ENCODE measurements at regions of chr2 and their contacts with region 1.

Region 1: GRCh38 chr2:182980115-182980514 is 58.1 kb downstream of the NCKAP1 start:
- ATAC-seq: peak in 4 of 8 experiments; percentile 45 to 70 (median 54)
- H3K4me3 ChIP-seq: no peak overlapping the region
- H3K27ac ChIP-seq: no peak overlapping the region
- H3K4me1 ChIP-seq: no peaks in the 10 kb centered on the region

Region 2: DNA sequence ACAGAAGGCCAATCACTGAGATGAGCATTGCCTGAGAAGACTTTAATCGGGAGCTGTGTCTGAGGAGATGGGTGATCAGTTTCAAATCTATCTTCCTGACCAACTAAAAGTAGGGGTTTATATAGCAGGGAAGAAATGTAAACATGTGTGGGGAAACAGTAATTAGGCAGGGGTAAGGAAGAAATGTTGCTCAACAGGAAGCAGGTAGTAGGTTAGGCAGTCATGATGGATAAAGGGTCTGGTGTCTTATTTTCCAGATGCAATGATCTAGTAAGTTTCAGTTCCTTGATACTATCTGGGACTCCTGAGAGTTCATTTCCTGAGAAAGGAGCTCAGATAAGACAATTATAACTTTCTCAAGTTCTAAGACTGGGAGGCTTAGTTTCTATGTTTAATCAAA is 297.9 kb before region 1 on chr2:
- in situ Hi-C with region 1: no loop called
- ATAC-seq: no peak
- H3K4me3 ChIP-seq: no peak overlapping the region
- H3K27ac ChIP-seq: no peak overlapping the region
- H3K4me1 ChIP-seq: no peaks in the 10 kb centered on the region

Region 3: DNA sequence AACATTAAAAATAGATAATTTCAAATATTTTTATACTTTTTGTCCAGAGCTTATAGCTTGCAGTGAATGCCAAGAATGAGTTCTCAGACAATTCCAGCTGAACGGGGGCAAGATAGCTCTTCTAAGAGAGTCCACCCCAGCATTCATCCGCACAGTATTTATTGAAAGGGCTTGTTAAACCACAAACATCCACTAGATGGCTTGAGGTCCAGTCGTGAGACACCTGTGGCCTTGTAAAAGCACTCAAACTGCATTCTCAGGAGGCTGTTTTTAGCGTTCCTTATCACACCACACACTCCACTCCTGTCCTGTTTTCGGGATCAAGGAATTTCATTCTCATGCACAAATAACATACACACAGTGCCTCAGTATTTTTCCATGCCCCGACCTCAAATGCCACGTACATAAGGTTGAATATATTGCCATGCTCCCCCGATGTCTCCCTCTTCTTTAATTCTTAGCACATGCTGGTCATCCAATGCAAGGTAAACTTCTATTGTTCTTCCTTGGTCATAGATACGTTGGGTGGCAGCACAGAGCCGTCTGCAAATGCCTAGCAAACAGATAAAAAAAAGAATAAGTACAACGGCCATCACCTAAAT is 216.7 kb before region 1 on chr2:
- in situ Hi-C with region 1: loop called in 2 of 9 experiments (anchors 25 kb)
- ATAC-seq: peak in 4 of 8 experiments; percentile 25 to 59 (median 48)
- H3K4me3 ChIP-seq: no peak overlapping the region
- H3K27ac ChIP-seq: no peak overlapping the region
- H3K4me1 ChIP-seq: no peaks in the 10 kb centered on the region

Region 4: DNA sequence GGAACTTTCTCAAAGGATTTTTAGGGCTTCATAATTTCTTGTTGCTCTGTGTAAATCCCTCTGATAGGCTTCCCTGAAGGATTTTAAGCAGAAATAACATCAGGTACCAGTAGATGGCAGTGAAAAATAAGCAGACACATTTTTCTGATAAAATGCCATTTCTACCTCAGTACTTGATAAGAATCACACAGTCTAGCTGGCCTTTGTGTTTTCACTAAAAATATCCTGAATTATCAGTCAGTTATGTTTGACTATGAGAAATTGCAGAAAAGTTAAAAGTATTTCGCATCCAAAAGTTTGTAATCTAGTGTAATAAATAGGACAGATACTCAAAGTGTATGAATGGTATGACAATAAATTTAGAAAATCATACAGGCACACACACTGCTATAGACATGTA is 195.3 kb before region 1 on chr2:
- in situ Hi-C with region 1: loop called in 3 of 9 experiments (anchors 10 to 25 kb)
- ATAC-seq: peak in 5 of 8 experiments; percentile 48 to 57 (median 52)
- H3K4me3 ChIP-seq: no peak overlapping the region
- H3K27ac ChIP-seq: no peak overlapping the region
- H3K4me1 ChIP-seq: no peaks in the 10 kb centered on the region

Region 5: DNA sequence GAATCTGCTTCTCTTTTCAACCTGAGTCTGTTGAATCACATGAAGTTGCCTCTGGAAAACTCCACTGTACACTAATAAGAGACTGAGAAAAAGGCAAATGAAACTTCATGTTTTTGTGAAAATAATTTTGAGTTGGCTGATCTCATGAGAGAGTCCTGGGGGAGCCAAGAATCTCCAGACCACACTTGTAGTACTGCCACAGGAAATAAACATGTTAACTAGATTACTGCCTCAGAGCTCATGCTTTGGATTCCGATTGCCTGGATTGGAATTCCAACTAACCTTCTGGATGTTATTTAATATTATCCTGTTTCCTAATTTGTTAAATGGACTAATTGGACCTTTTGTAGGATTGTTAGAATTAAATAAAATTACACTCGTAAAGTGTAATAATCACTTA is 169.4 kb after region 1 on chr2:
- in situ Hi-C with region 1: no loop called
- ATAC-seq: no peak
- H3K4me3 ChIP-seq: no peak overlapping the region
- H3K27ac ChIP-seq: no peak overlapping the region
- H3K4me1 ChIP-seq: no peaks in the 10 kb centered on the region

Region 6: DNA sequence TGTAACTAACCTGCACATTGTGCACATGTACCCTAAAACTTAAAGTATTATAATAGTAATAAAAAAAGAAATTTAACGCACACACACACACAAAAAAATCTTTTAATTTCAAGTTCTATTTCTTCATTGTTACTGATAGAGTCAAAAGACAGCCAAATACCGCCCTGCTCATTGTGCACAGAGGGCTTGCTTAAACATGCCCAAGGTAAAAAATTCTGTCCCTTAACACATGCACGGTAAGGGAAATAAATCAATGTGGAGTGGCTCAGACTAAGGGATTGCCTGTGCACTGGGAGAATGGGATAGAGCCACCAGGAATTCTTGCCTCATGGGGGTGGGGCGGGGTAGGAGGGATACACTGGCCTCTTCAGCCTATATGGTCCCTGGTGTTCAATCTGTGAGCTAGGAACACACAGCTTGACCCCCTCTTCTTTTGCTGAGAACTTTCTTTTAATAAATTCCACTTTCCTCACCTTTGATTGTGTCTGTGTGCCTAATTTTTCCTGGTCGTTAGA is 612.2 kb after region 1 on chr2:
- in situ Hi-C with region 1: no loop called
- ATAC-seq: no peak
- H3K4me3 ChIP-seq: no peak overlapping the region
- H3K27ac ChIP-seq: no peak overlapping the region
- H3K4me1 ChIP-seq: no peaks in the 10 kb centered on the region

Measured in motor neuron (in vitro differentiated cells).